Right lobe of liver (tissue), 6 donors: ENCODE measurements at regions of chr3 and their contacts with region 1.

Region 1: DNA sequence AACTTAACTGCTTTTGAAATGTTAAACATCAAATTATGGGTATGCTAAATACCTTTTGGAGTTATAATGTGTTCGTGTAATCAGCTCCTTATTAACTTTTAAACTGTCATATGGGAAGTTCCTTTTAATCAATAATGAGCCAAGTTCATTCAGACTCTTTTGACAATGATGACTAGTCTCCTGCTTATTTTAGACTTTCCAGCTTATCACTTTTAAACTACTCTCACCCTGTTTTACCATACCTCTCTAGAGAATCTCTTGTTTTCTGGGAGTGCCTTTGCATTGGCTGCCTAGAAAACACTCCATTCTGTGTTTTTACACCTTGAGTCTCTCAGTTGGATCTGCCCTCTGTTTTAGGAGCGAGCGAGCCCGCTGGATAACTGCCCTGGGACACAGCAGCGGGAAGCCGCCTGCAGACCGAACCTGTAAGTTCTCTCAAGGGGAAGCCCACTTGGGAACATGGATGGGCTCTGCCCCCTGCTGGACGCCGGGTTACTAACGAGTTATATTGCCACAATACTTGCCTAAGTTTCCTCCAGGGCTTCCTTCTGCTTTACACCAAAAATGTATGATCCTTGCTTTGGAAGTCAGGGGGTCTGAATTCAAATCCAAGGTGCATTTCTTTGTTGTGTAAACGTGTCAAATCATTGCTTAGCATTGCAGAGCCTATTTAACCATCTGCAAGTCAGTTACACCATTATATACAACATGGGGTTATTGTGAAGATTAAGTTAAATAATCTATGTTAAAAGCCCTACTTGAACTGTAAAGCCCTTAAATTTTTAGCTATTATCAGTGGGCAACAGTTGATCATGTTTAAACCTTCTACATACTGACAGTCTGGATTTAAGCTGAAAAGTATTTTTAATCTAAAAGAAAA is 71.3 kb downstream of the DHX36 start:
- DNase-seq: peak; percentile 90 to 93 (median 90)
- ATAC-seq: peak; percentile 93 to 96 (median 96)
- H3K4me3 ChIP-seq: no peak overlapping the region
- H3K27ac ChIP-seq: peak overlapping the region in 1 of 3 donors; percentile 20
- H3K4me1 ChIP-seq: peaks cover 0 to 30% (median 10%) of the 10 kb centered on the region in 4 donors
- H3K27me3 ChIP-seq: no peaks in the 10 kb centered on the region
- CTCF ChIP-seq: peak; percentile 86 to 91 (median 90)
- POLR2A ChIP-seq: no peak

Region 2: DNA sequence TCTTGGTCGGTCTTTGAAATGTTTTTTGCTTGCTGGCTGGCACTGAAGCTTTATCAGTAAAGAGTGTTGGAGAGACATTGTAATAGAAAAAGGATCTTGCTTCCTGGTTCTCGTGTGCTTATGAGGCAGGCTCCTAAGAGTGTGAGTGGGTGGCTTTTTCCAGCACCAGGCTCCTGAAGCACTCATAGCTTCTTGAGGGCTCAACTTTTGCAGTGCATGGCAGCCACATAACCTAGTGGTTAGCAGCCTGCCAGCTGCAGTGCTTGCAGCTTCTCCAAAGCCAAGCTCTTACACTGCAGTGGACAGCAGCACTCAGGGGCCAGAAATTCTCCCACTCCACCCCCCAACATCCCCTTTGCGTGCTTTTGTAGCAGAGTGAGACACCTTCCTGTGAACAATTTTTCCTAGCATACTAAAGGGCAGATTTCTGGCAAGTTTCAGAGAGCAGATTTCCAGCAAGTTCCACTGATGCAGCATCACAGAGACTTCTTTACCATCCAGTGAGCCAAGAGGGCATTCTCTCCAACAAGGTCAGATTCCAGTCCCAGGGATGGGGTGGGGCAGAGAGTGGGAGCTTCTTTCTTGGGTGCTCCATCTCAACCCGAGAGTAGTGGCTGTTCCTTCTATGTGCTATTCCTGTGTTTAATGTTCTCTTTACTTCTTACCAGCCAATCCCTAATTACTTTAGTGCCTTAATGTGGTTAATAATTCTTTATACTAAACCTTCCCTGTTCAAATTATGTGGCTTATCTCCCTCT is 147.6 kb before region 1 on chr3:
- intact Hi-C with region 1: loop called in 1 of 2 experiments (anchors 10 kb)
- DNase-seq: no peak
- ATAC-seq: no peak
- H3K4me3 ChIP-seq: no peak overlapping the region
- H3K27ac ChIP-seq: no peak overlapping the region
- H3K4me1 ChIP-seq: peaks cover 0 to 2% (median 0%) of the 10 kb centered on the region in 4 donors
- H3K27me3 ChIP-seq: no peaks in the 10 kb centered on the region
- CTCF ChIP-seq: no peak
- POLR2A ChIP-seq: no peak

Region 3: GRCh38 chr3:154367246-154367645 is 114.2 kb after region 1 on chr3:
- intact Hi-C with region 1: no loop called
- DNase-seq: no peak
- ATAC-seq: no peak
- H3K4me3 ChIP-seq: no peak overlapping the region
- H3K27ac ChIP-seq: no peak overlapping the region
- H3K4me1 ChIP-seq: no peaks in the 10 kb centered on the region
- H3K27me3 ChIP-seq: no peaks in the 10 kb centered on the region
- CTCF ChIP-seq: no peak
- POLR2A ChIP-seq: no peak